ENCODE measurements at regions of chr10 and their contacts with region 1.

Region 1: GRCh38 chr10:48215488-48216204 is 58.9 kb downstream of the FRMPD2 start:
- DNase-seq: peak; percentile 72
- ATAC-seq: peak; percentile 61
- H3K4me3 Mint-ChIP-seq: no peak overlapping the region
- H3K27ac Mint-ChIP-seq: no peak overlapping the region
- H3K4me1 Mint-ChIP-seq: no peaks in the 10 kb centered on the region
- H3K27me3 Mint-ChIP-seq: peaks cover 5% of the 10 kb centered on the region

Region 2: DNA sequence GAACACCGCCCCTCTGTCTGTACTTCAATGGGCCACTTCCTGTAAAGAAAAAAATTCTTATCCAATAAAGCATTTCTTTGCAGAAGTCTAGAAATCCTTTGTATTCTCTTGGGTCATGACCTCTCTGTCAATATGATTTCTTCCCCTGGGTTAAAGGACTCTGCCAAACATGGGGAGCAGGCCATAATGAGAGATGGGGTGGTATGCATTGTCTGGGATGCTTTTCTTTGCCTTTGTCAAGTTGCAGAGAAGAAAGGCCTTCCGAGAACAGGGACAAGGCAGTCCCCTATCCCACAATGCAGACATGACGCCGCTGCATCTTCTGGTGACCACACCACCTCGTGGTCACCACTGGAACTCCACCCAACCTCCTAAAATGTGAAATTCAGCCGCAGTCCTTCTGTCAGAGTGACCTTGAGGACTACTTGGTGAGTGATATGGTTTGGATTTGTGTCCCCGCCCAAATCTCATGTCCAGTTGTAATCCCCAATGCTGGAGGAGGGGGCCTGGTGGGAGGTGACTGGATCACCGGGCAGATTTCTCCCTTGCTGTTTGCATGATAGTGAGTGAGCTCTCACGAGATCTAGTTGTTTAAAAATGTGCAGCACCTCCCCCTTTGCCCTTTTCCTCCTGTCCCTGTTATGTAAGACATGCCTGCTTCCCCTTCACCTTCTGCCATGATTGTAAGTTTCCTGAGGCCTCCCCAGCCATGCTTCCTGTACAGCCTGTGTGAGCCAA is 74.0 kb after region 1 on chr10:
- CTCF ChIA-PET with region 1: interaction called, 7 read pairs
- POLR2A ChIA-PET with region 1: no interaction called
- intact Hi-C with region 1: loop called (anchors 1 kb)
- DNase-seq: peak; percentile 70
- ATAC-seq: peak; percentile 78
- H3K4me3 Mint-ChIP-seq: no peak overlapping the region
- H3K27ac Mint-ChIP-seq: no peak overlapping the region
- H3K4me1 Mint-ChIP-seq: peaks cover 11% of the 10 kb centered on the region
- H3K27me3 Mint-ChIP-seq: peaks cover 18% of the 10 kb centered on the region

Region 3: GRCh38 chr10:48506147-48506917 is 290.7 kb after region 1 on chr10:
- CTCF ChIA-PET with region 1: no interaction called
- POLR2A ChIA-PET with region 1: no interaction called
- intact Hi-C with region 1: loop called in 1 of 2 experiments (anchors 2 kb)
- DNase-seq: peak; percentile 42
- ATAC-seq: no peak
- H3K4me3 Mint-ChIP-seq: no peak overlapping the region
- H3K27ac Mint-ChIP-seq: no peak overlapping the region
- H3K4me1 Mint-ChIP-seq: no peaks in the 10 kb centered on the region
- H3K27me3 Mint-ChIP-seq: no peaks in the 10 kb centered on the region